IMR-90 (cell line): ENCODE measurements at regions of chr3 and their contacts with region 1.

Region 1: DNA sequence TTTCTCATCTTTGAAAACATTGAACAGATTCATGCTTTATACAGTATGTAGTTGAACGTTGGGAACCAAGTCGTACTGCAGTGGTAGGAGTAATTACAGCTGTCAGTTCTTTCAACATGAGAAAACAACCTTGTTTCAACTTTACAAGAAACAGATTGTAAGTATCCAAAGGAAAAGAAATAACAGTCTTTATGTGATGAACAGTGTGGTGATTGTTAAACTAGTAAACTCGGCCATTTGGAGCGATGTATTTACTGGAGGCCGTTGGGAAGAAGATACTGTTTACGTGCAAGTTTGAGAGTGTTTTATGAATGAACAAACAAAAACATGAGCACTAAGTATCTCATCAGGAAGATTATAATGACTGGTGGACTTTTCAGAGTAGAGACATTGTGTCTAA is 48.4 kb downstream of the EPHA3 start:
- DNase-seq: no peak
- ATAC-seq: no peak
- H3K4me3 ChIP-seq: no peak overlapping the region
- H3K27ac ChIP-seq: no peak overlapping the region
- H3K4me1 ChIP-seq: no peaks in the 10 kb centered on the region
- H3K27me3 ChIP-seq: no peaks in the 10 kb centered on the region
- CTCF ChIP-seq: no peak
- POLR2A ChIP-seq: no peak
- RAD21 ChIP-seq: no peak

Region 2: GRCh38 chr3:89212619-89213018 is 56.8 kb after region 1 on chr3:
- CTCF ChIA-PET with region 1: no interaction called
- POLR2A ChIA-PET with region 1: no interaction called
- dilution Hi-C with region 1: no loop called
- in situ Hi-C with region 1: no loop called
- intact Hi-C with region 1: loop called (anchors 5 kb)
- DNase-seq: peak; percentile 2
- ATAC-seq: peak; percentile 27
- H3K4me3 ChIP-seq: no peak overlapping the region
- H3K27ac ChIP-seq: no peak overlapping the region
- H3K4me1 ChIP-seq: no peaks in the 10 kb centered on the region
- H3K27me3 ChIP-seq: no peaks in the 10 kb centered on the region
- CTCF ChIP-seq: no peak
- POLR2A ChIP-seq: no peak
- RAD21 ChIP-seq: no peak